Activated CD4-positive, alpha-beta memory T cell treated with anti-CD3 and anti-CD28 coated beads for 36 hours (primary cell): ENCODE measurements at regions of chr21 and their contacts with region 1.

Region 1: GRCh38 chr21:42233067-42233961 is 14.4 kb downstream of the ABCG1 start:
- DNase-seq: peak; percentile 94
- H3K4me3 Mint-ChIP-seq: peak overlapping the region; percentile 74
- H3K27ac Mint-ChIP-seq: peak overlapping the region; percentile 96
- H3K4me1 Mint-ChIP-seq: peaks cover 94% of the 10 kb centered on the region
- H3K27me3 Mint-ChIP-seq: no peaks in the 10 kb centered on the region

Region 2: GRCh38 chr21:42002421-42002958 is 230.8 kb before region 1 on chr21:
- CTCF ChIA-PET with region 1: interaction called, 4 read pairs
- POLR2A ChIA-PET with region 1: interaction called, 4 read pairs
- intact Hi-C with region 1: loop called (anchors 5 kb)
- DNase-seq: peak; percentile 92
- H3K4me3 Mint-ChIP-seq: peak overlapping the region; percentile 37
- H3K27ac Mint-ChIP-seq: peak overlapping the region; percentile 86
- H3K4me1 Mint-ChIP-seq: peaks cover 61% of the 10 kb centered on the region
- H3K27me3 Mint-ChIP-seq: no peaks in the 10 kb centered on the region

Region 3: GRCh38 chr21:42187976-42188653 is 45.2 kb before region 1 on chr21:
- CTCF ChIA-PET with region 1: interaction called, 12 read pairs
- POLR2A ChIA-PET with region 1: interaction called, 15 read pairs
- intact Hi-C with region 1: loop called (anchors 1 kb)
- DNase-seq: peak; percentile 92
- H3K4me3 Mint-ChIP-seq: peak overlapping the region; percentile 60
- H3K27ac Mint-ChIP-seq: peak overlapping the region; percentile 96
- H3K4me1 Mint-ChIP-seq: peaks cover 62% of the 10 kb centered on the region
- H3K27me3 Mint-ChIP-seq: no peaks in the 10 kb centered on the region

Region 4: GRCh38 chr21:42245331-42246193 is 12.2 kb after region 1 on chr21:
- CTCF ChIA-PET with region 1: no interaction called
- POLR2A ChIA-PET with region 1: no interaction called
- intact Hi-C with region 1: no loop called
- DNase-seq: no peak
- H3K4me3 Mint-ChIP-seq: no peak overlapping the region
- H3K27ac Mint-ChIP-seq: no peak overlapping the region
- H3K4me1 Mint-ChIP-seq: peaks cover 3% of the 10 kb centered on the region
- H3K27me3 Mint-ChIP-seq: no peaks in the 10 kb centered on the region

Region 5: GRCh38 chr21:42400525-42400924 is 167.2 kb after region 1 on chr21:
- CTCF ChIA-PET with region 1: interaction called, 3 read pairs
- POLR2A ChIA-PET with region 1: interaction called, 5 read pairs
- intact Hi-C with region 1: loop called (anchors 5 kb)
- DNase-seq: peak; percentile 55
- H3K4me3 Mint-ChIP-seq: peak overlapping the region; percentile 49
- H3K27ac Mint-ChIP-seq: peak overlapping the region; percentile 77
- H3K4me1 Mint-ChIP-seq: peaks cover 50% of the 10 kb centered on the region
- H3K27me3 Mint-ChIP-seq: no peaks in the 10 kb centered on the region